Activated naive CD4-positive, alpha-beta T cell treated with anti-CD3 and anti-CD28 coated beads for 36 hours (primary cell): ENCODE measurements at regions of chr12 and their contacts with region 1.

Region 1: DNA sequence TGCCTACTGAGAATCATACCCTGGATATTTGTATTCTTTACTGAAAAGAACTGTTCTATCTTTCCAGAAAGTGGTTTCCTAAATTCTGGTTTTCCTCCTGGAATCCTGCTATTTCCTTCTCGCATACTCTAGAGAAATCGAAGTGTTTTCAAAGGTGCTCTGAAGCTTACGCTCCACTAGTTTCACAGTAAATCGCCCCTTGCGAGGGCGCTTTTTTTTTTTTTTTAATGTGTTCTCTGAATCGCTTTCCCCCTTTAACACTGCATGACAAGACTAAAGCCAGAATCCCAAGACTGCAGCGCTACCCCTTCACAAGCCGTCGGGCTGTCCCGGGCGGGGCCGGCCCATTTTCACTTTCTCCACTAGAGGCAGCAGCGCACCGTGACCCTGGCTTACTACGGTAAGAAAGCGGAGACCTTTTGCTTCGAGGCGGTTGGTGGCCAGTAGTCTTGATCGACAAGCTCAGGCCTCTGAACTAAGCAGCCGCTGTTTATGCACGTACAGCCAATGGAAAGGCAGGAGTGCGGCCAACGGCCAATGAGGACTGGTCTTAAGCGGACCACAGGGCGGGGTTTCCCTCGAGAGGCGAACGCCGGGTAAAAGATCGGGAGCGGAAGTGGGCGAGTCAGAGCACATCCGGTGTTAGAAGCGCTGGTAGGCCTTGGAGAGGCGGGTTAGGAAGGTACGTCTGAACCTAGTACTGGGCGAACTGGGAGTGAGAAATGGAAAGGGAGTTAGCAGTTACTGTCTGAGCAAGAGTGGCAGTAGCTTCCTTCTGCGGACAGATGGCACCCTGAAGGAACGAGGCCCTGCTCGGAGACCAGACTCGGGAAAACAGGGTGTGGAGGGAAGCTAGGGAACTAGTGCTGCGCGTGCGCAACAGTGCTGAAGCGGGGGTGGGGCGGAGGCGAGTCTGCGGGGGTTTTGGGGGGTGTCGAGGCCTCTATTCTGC is at the start of gene TMBIM6:
- DNase-seq: peak; percentile 99
- H3K4me3 Mint-ChIP-seq: peak within 1 kb of the TSS; percentile 100
- H3K27ac Mint-ChIP-seq: peak within 1 kb of the TSS; percentile 100
- H3K4me1 Mint-ChIP-seq: peaks cover 34% of the 10 kb centered on the region
- H3K27me3 Mint-ChIP-seq: no peaks in the 10 kb centered on the region
- total RNA-seq, gene TMBIM6: 466 to 498 TPM

Region 2: GRCh38 chr12:49098035-49098451 is 643.2 kb before region 1 on chr12:
- CTCF ChIA-PET with region 1: no interaction called
- intact Hi-C with region 1: no loop called
- DNase-seq: peak; percentile 76
- H3K4me3 Mint-ChIP-seq: no peak overlapping the region
- H3K27ac Mint-ChIP-seq: no peak overlapping the region
- H3K4me1 Mint-ChIP-seq: peaks cover 10% of the 10 kb centered on the region
- H3K27me3 Mint-ChIP-seq: peaks cover 21% of the 10 kb centered on the region

Region 3: DNA sequence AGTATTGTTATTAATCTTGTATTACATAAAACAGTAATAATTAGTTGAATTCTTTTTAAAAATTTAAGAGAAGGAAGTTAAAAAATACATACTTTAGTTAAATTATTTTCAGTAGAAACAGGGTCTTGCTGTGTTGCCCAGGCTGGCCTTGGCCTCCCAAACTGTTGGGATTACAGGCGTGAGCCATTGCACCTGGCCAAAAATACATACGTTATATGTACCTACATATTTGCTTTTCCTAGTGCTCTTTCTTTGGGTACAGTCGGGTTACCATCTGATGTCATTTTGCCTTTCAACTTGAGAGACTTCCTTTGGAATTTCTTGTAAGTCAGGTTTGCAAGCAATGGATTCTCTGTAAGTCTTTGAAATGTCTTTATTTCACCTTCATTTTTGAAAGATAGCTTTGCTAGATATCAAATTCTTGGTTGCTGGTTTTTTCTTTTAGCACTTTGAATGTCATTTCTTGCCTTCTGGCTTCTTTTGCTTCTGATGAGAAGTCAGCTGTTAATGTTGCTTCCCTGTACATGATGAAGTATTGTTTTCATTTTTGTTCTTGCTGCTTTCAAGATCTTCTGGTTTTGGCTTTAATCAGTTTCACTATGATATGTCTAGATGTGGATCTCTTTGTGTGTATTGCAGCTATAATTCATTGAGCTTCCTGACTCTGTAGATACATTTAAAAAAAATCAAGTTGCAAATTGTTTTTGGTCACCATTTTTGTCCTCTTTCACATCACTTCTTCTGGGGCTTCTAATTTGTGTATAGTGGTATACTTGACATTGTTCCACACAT is 289.5 kb before region 1 on chr12:
- CTCF ChIA-PET with region 1: no interaction called
- intact Hi-C with region 1: loop called (anchors 5 kb)
- DNase-seq: no peak
- H3K4me3 Mint-ChIP-seq: no peak overlapping the region
- H3K27ac Mint-ChIP-seq: peak overlapping the region; percentile 78
- H3K4me1 Mint-ChIP-seq: peaks cover 22% of the 10 kb centered on the region
- H3K27me3 Mint-ChIP-seq: no peaks in the 10 kb centered on the region

Region 4: GRCh38 chr12:49644620-49644994 is 96.6 kb before region 1 on chr12:
- CTCF ChIA-PET with region 1: interaction called, 6 read pairs
- intact Hi-C with region 1: loop called (anchors 1 kb)
- DNase-seq: peak; percentile 90
- H3K4me3 Mint-ChIP-seq: no peak overlapping the region
- H3K27ac Mint-ChIP-seq: peak overlapping the region; percentile 71
- H3K4me1 Mint-ChIP-seq: peaks cover 29% of the 10 kb centered on the region
- H3K27me3 Mint-ChIP-seq: no peaks in the 10 kb centered on the region

Region 5: DNA sequence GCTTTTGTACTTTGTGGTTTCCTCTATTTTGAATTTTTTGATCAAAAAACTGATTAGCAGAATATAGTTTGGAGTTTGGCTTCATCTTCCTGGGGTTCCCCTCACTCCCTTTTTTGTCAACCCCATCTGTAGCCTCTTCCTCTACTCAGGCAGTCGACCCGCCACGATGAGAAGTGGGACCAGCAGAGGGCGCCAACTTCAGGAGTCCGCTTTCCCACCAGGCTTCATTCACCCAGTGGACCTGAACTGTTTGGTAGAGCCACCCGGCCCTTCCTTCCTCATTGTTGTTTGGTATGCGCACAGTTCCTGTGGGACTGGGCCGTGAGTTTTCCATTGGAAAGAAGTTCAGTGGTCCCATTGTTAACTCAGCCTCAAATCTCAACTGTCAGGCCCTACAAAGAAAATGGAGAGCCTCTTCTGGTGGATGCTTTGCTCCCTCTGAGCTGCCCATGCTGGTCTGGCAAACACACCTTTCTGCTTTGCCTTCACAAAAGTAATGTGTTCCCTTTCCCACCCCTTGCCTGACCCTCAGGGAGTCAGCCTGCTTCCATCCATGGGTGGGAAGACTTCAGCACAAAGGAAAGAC is 21.9 kb after region 1 on chr12:
- CTCF ChIA-PET with region 1: interaction called, 34 read pairs
- intact Hi-C with region 1: loop called (anchors 1 kb)
- DNase-seq: peak; percentile 91
- H3K4me3 Mint-ChIP-seq: no peak overlapping the region
- H3K27ac Mint-ChIP-seq: peak overlapping the region; percentile 76
- H3K4me1 Mint-ChIP-seq: peaks cover 61% of the 10 kb centered on the region
- H3K27me3 Mint-ChIP-seq: no peaks in the 10 kb centered on the region

Region 6: DNA sequence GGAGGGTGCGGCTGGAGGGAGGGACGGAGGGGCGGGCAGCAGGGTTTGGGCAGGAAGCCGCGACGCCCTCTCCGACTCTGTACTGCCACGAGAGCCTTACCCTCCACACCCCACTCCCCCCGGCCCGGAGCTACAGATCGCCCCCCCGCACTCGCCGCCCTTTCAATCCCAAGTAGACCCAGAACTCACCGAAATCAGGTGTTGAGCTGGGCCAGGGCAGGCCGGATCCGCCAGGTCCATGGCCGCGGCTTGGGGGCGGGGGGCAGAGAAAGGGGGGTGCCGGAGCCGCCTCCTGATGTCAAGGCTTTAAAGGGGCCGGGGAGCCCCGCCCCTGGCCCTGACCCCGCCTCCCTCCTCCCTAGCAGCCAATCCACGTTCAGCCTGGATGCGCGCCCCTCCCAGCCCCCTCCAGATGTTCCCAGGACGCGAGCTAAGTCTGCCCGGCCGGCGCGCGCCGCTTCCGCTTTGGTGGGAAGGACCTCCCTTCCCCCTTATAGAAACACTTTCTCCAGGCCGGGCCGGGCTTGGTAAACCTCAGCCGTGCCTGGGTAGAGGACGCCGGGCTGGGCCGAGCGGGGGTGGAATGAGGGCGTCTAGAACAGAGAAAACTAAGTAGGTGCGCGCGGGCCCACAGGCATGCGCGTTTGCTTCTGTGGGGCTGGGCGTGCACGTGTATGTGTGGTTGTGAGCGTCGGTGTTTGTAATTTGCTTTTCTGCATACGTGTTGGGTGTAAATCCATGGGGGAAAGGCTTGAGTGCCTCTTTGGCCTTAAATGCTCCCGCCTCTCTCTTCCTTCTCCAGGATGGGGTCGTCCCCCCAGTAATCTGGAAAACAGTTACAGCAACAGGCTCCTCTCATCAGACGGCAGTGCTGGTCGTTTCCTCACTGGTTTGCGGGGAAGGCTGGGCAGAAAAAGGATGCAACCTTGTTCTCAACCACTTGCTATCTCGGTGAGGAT is 87.2 kb after region 1 on chr12 and contains the start of gene NCKAP5L:
- CTCF ChIA-PET with region 1: interaction called, 10 read pairs
- intact Hi-C with region 1: loop called (anchors 1 kb)
- DNase-seq: peak; percentile 94
- H3K4me3 Mint-ChIP-seq: peak within 1 kb of the TSS; percentile 92
- H3K27ac Mint-ChIP-seq: peak within 1 kb of the TSS; percentile 86
- H3K4me1 Mint-ChIP-seq: peaks cover 27% of the 10 kb centered on the region
- H3K27me3 Mint-ChIP-seq: no peaks in the 10 kb centered on the region
- total RNA-seq, gene NCKAP5L: 2.8 TPM